ENCODE measurements at regions of chr11 and their contacts with region 1.

Region 1: GRCh38 chr11:8099291-8099899 is 18.4 kb downstream of the TUB start:
- DNase-seq: peak; percentile 82
- ATAC-seq: peak; percentile 87
- H3K4me3 ChIP-seq: no peak overlapping the region
- H3K27ac ChIP-seq: no peak overlapping the region
- H3K4me1 ChIP-seq: peaks cover 9% of the 10 kb centered on the region
- H3K27me3 ChIP-seq: no peaks in the 10 kb centered on the region
- CTCF ChIP-seq: peak; percentile 89
- POLR2A ChIP-seq: no peak
- RAD21 ChIP-seq: peak; percentile 91

Region 2: GRCh38 chr11:7688238-7688826 is 411.1 kb before region 1 on chr11:
- CTCF ChIA-PET with region 1: interaction called, 3 read pairs
- POLR2A ChIA-PET with region 1: no interaction called
- dilution Hi-C with region 1: no loop called
- in situ Hi-C with region 1: loop called (anchors 25 kb)
- intact Hi-C with region 1: no loop called
- DNase-seq: peak; percentile 31
- ATAC-seq: peak; percentile 82
- H3K4me3 ChIP-seq: no peak overlapping the region
- H3K27ac ChIP-seq: no peak overlapping the region
- H3K4me1 ChIP-seq: 0 out of 2 replicates have a peak, but pooled peaks cover 2% of the 10 kb centered on the region
- H3K27me3 ChIP-seq: peaks cover 17% of the 10 kb centered on the region
- CTCF ChIP-seq: peak; percentile 77
- POLR2A ChIP-seq: no peak
- RAD21 ChIP-seq: peak; percentile 60

Region 3: DNA sequence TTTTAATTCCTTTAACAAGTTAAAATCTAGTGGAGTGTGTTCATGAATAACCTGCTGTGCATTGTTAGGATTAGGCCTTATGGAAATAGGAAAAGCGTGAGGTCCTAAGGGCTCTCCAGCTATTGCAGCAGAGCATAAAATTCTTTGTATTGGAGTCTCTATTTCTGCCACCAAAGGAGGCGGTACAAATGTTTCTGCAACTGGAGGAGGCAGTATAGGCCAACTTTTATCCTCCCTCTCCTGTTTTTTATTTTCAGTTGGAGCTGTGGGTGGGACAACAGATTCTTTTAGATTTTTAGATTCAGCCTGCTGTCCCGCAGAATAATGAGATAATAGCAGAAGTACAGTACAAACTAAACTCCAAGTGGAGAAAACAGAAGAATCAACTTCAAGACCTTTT is 194.5 kb before region 1 on chr11:
- CTCF ChIA-PET with region 1: interaction called, 5 read pairs
- POLR2A ChIA-PET with region 1: no interaction called
- dilution Hi-C with region 1: no loop called
- in situ Hi-C with region 1: no loop called
- intact Hi-C with region 1: loop called (anchors 1 kb)
- DNase-seq: peak; percentile 69
- ATAC-seq: peak; percentile 57
- H3K4me3 ChIP-seq: no peak overlapping the region
- H3K27ac ChIP-seq: no peak overlapping the region
- H3K4me1 ChIP-seq: peaks cover 9% of the 10 kb centered on the region
- H3K27me3 ChIP-seq: no peaks in the 10 kb centered on the region
- CTCF ChIP-seq: peak; percentile 71
- POLR2A ChIP-seq: no peak
- RAD21 ChIP-seq: peak; percentile 74

Region 4: DNA sequence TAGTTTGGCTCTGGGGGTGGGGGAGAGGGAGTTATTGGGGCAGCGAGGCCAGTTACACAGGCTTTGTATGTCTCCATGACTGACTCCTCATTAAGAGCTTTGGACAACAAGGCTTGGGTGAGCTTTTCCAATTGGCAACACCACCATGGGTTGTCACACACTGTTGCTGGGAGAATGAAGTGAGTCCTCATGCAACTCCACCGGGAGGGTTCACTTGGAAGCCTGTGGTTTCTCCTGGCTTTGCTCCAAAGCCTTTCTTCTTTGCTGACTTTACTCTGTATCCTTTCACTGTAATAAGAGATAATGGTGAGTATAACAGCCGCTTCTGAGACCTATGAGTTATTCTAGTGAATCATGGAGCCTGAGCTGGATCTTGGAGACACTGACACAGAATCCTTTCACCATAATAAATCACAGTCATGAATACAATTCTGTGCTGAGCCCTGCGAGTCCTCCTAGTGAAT is 87.4 kb before region 1 on chr11:
- CTCF ChIA-PET with region 1: interaction called, 55 read pairs
- POLR2A ChIA-PET with region 1: no interaction called
- dilution Hi-C with region 1: no loop called
- in situ Hi-C with region 1: loop called (anchors 5 kb)
- intact Hi-C with region 1: no loop called
- DNase-seq: peak; percentile 95
- ATAC-seq: peak; percentile 81
- H3K4me3 ChIP-seq: no peak overlapping the region
- H3K27ac ChIP-seq: no peak overlapping the region
- H3K4me1 ChIP-seq: peaks cover 20% of the 10 kb centered on the region
- H3K27me3 ChIP-seq: no peaks in the 10 kb centered on the region
- CTCF ChIP-seq: no peak
- POLR2A ChIP-seq: no peak
- RAD21 ChIP-seq: no peak

Region 5: DNA sequence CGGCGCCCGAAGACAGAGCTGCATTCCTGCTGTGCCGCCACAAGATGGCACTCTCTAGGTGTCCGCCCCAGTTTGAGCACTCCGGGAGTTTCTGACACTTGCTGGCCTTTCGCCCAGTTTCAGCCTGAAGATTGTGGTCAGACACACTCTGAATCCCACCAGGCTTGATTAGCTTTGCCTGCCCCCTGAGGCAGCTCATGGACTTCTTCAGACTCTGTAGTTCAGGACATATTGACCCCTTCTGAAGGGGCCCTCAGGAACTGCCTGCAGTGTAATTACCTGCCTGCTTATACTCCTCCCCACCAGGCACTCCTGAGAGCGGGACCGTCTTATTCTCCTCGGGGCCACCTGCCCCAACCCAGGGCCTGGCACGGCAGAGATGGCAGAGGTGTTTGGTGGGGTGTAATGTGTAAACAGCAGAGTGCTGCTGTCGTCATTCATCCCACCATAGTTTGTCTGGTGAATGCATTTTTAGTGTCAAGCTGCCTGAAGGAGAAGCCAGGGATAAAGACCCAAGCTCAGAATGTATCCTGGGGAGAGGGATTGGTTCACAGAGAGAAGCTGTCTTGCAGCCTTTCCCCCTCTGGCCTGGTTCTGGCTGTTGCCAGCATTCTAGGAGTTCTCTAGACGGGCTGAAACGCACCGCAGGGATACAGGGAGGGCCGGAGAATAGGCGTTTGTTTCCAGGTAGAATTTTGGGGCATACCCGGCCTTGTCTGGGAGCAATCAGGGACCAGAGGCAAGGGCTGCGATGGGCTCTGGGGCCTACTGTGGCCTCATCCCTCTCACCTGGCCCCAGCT is 65.9 kb before region 1 on chr11:
- CTCF ChIA-PET with region 1: interaction called, 27 read pairs
- POLR2A ChIA-PET with region 1: no interaction called
- dilution Hi-C with region 1: no loop called
- in situ Hi-C with region 1: loop called (anchors 10 kb)
- intact Hi-C with region 1: loop called (anchors 1 kb)
- DNase-seq: peak; percentile 84
- ATAC-seq: peak; percentile 98
- H3K4me3 ChIP-seq: no peak overlapping the region
- H3K27ac ChIP-seq: no peak overlapping the region
- H3K4me1 ChIP-seq: 0 out of 2 replicates have a peak, but pooled peaks cover 1% of the 10 kb centered on the region
- H3K27me3 ChIP-seq: peaks cover 4% of the 10 kb centered on the region; the same call in 1 of the 2 replicates
- CTCF ChIP-seq: peak; percentile 95
- POLR2A ChIP-seq: no peak
- RAD21 ChIP-seq: peak; percentile 91